GM12878 (cell line): ENCODE measurements at regions of chr11 and their contacts with region 1.

Region 1: DNA sequence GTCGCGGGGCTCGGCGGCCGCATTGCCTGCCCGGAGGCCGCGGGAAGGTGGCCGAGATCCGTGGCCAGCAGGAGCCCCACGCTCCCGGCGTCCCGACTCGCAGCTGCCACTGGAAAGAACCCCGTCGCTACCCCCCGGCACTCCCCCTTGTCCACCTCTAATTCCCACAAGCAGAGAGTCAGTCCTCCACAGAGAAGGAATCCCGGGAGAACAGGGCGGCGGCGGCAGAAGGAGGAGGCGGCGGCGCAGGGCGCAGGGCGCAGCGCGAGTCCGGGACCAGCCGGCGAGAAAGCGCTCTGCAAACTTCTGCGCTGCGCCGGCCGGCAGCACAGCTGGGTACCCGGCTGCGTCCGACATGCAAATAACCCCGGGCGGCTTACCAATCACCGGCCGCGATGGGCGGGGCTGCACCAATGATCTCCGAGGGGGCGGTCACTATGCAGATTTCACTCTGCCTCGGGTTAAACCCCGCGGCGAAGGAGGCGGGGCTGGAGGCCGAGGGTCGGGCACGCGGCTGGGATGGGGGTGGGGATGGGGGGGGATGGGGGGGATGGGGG is at the start of gene ABTB2:
- DNase-seq: peak; percentile 64
- ATAC-seq: peak; percentile 92
- H3K4me3 ChIP-seq: peak within 1 kb of the TSS; percentile 84
- H3K27ac ChIP-seq: peak within 1 kb of the TSS; percentile 13; the same call in 1 of the 2 replicates
- H3K4me1 ChIP-seq: peaks cover 5% of the 10 kb centered on the region
- H3K27me3 ChIP-seq: peaks cover 0 to 3% of the 10 kb centered on the region in 2 experiments; a peak in 2 of 4 replicates
- CTCF ChIP-seq: no peak
- EP300 ChIP-seq: no peak
- POLR2A ChIP-seq: peak; percentile 99
- RAD21 ChIP-seq: no peak
- polyA plus RNA-seq, gene ABTB2: 0.13 to 0.16 TPM

Region 2: GRCh38 chr11:33863418-33864172 is 494.2 kb before region 1 on chr11:
- CTCF ChIA-PET with region 1: no interaction called
- POLR2A ChIA-PET with region 1: no interaction called
- RAD21 ChIA-PET with region 1: interaction called, 3 read pairs
- SMC1A ChIA-PET with region 1: no interaction called
- in situ Hi-C with region 1: loop called (anchors 5 kb)
- intact Hi-C with region 1: loop called (anchors 2 kb)
- DNase-seq: no peak
- ATAC-seq: no peak
- H3K4me3 ChIP-seq: no peak overlapping the region
- H3K27ac ChIP-seq: no peak overlapping the region
- H3K4me1 ChIP-seq: no peaks in the 10 kb centered on the region; the same call in 1 of the 2 replicates
- H3K27me3 ChIP-seq: peaks cover 1 to 5% of the 10 kb centered on the region in 2 experiments; a peak in 3 of 4 replicates
- CTCF ChIP-seq: 0 out of 6 replicates have a peak, but pooled peaks of 1 of the 3 experiments have one; percentile 6
- EP300 ChIP-seq: no peak
- POLR2A ChIP-seq: no peak
- RAD21 ChIP-seq: peak; percentile 19; the same call in 1 of the 2 replicates

Region 3: GRCh38 chr11:33912405-33913361 is 445.1 kb before region 1 on chr11:
- CTCF ChIA-PET with region 1: no interaction called
- POLR2A ChIA-PET with region 1: no interaction called
- RAD21 ChIA-PET with region 1: no interaction called
- SMC1A ChIA-PET with region 1: no interaction called
- in situ Hi-C with region 1: no loop called
- intact Hi-C with region 1: no loop called
- DNase-seq: peak; percentile 82
- ATAC-seq: peak; percentile 98
- H3K4me3 ChIP-seq: no peak overlapping the region
- H3K27ac ChIP-seq: peak overlapping the region; percentile 82
- H3K4me1 ChIP-seq: peaks cover 12% of the 10 kb centered on the region
- H3K27me3 ChIP-seq: no peaks in the 10 kb centered on the region
- CTCF ChIP-seq: no peak
- EP300 ChIP-seq: 0 out of 4 replicates have a peak, but pooled peaks have one; percentile 16 to 45
- POLR2A ChIP-seq: peak; percentile 39; the same call in 1 of the 2 replicates
- RAD21 ChIP-seq: no peak

Region 4: DNA sequence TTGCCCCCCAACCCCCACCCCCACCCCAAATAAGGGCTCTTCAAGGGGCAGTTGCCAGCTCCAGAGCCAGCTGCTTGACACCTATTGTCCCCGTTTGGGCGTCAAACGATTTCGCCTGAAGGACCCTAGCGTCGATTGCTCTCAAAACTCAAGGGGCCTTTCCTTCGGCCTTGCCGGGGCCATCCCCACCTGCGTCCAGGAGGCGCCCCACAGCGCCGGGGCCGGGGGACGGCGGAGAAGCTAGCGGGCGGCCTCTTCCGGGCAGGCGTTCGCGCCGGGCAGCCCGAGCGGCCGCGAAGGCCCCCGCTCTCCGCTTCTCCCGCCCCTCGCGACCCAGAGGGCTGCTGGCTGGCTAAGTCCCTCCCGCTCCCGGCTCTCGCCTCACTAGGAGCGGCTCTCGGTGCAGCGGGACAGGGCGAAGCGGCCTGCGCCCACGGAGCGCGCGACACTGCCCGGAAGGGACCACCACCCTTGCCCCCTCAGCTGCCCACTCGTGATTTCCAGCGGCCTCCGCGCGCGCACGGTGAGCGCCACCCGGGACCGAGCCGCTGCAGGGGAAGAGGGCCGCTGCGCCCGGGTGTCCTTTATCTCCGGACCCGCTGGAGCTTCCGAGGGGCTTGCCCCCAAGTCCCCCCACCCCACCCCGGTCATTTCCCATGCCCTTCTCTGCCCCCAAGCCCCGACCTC is 306.3 kb before region 1 on chr11 and contains the start of gene CAPRIN1:
- CTCF ChIA-PET with region 1: no interaction called
- POLR2A ChIA-PET with region 1: interaction called, 3 read pairs
- RAD21 ChIA-PET with region 1: interaction called, 4 read pairs
- SMC1A ChIA-PET with region 1: no interaction called
- in situ Hi-C with region 1: no loop called
- intact Hi-C with region 1: loop called (anchors 5 kb)
- DNase-seq: peak; percentile 65
- ATAC-seq: peak; percentile 82
- H3K4me3 ChIP-seq: peak within 1 kb of the TSS; percentile 96
- H3K27ac ChIP-seq: peak within 1 kb of the TSS; percentile 91
- H3K4me1 ChIP-seq: no peaks in the 10 kb centered on the region; the same call in 1 of the 2 replicates
- H3K27me3 ChIP-seq: no peaks in the 10 kb centered on the region
- CTCF ChIP-seq: no peak
- EP300 ChIP-seq: no peak
- POLR2A ChIP-seq: peak; percentile 93
- RAD21 ChIP-seq: no peak
- polyA plus RNA-seq, gene CAPRIN1: 50.4 to 51.8 TPM

Region 5: DNA sequence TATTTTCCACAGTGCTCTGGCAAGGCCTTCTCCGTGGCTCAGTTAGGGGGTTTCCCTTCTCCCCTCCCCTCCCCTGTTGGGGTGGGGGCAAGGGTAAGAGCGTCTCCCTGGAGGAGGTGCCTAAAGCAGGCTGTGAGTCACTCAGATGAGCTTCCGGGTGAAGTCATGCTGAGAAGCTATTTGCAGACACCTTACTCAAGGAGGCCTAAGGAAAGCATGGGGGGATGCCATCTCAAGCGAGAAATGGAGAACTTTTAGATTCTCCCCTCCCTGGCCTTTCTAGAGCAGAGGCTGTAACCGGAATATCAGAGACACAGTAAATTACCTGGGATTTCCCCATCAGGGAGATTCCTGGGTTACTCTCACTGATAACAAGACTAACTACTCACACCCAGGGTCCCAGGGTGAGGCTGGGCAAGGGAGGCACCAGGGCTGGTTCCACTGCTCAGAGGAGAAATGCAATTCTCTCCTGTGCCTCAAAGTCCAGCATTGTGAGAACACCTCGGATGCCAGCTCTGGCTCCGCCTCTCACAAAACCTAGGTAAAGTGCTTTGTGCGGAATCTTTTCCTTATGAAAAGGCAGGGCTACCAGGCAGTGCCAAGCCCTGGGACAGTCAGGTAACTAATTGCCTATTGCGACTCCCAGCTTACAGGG is 123.6 kb before region 1 on chr11:
- CTCF ChIA-PET with region 1: interaction called, 5 read pairs
- POLR2A ChIA-PET with region 1: no interaction called
- RAD21 ChIA-PET with region 1: interaction called, 9 read pairs
- SMC1A ChIA-PET with region 1: interaction called, 39 read pairs
- in situ Hi-C with region 1: no loop called
- intact Hi-C with region 1: loop called (anchors 2 kb)
- DNase-seq: peak; percentile 88
- ATAC-seq: peak; percentile 86
- H3K4me3 ChIP-seq: peak overlapping the region; percentile 29; the same call in 1 of the 2 replicates
- H3K27ac ChIP-seq: peak overlapping the region; percentile 54
- H3K4me1 ChIP-seq: peaks cover 48% of the 10 kb centered on the region
- H3K27me3 ChIP-seq: no peaks in the 10 kb centered on the region
- CTCF ChIP-seq: no peak
- EP300 ChIP-seq: peak; percentile 39 to 59; a peak in 2 of 4 replicates
- POLR2A ChIP-seq: no peak
- RAD21 ChIP-seq: no peak; the same call in 1 of the 2 replicates

Region 6: DNA sequence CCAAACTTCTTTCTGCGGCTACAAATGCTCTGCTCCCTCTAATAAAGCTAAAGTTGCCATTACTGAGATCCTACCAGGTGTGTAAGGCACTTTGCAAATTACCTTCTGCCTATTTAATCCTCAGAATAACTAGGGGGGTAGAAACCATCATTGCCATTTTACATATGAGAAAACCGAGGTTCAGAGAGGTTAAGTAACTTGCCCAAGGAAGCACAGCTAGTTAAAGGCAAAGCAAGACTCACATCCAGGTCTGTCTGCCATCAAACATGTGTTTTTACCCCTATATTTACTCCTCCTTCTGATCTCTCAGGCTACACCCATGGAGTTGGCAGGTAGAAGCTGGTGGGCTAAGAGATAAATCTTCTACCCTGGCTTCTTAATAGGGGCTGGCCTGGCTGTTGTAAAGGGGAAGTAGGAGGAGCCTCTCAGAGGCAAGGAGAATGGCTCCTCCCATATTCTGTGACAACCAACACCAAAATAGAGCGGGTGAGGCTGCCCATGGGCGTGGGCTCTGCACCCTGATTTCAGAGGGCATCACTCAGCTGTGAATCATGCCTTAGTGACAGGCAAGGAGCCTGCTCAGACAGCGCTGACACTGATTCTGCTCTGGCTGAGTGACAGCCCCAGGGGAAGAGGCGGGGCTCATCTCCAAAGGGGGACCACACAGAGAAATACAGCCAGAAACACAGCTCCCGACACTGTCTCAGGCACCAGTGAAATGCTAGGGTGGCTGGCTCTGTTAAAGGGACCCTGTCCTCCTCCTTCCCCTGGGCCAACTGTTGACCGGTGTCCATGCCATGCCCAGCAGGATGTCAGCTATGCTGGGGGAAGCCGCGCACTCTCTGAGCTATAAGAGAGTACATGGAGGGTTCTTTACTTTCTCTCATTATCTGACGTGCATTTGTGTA is 106.8 kb before region 1 on chr11:
- CTCF ChIA-PET with region 1: interaction called, 4 read pairs
- POLR2A ChIA-PET with region 1: no interaction called
- RAD21 ChIA-PET with region 1: interaction called, 14 read pairs
- SMC1A ChIA-PET with region 1: interaction called, 28 read pairs
- in situ Hi-C with region 1: no loop called
- intact Hi-C with region 1: no loop called
- DNase-seq: no peak
- ATAC-seq: peak; percentile 86
- H3K4me3 ChIP-seq: no peak overlapping the region
- H3K27ac ChIP-seq: no peak overlapping the region
- H3K4me1 ChIP-seq: peaks cover 16% of the 10 kb centered on the region
- H3K27me3 ChIP-seq: no peaks in the 10 kb centered on the region
- CTCF ChIP-seq: no peak
- EP300 ChIP-seq: no peak
- POLR2A ChIP-seq: no peak
- RAD21 ChIP-seq: no peak

Region 7: DNA sequence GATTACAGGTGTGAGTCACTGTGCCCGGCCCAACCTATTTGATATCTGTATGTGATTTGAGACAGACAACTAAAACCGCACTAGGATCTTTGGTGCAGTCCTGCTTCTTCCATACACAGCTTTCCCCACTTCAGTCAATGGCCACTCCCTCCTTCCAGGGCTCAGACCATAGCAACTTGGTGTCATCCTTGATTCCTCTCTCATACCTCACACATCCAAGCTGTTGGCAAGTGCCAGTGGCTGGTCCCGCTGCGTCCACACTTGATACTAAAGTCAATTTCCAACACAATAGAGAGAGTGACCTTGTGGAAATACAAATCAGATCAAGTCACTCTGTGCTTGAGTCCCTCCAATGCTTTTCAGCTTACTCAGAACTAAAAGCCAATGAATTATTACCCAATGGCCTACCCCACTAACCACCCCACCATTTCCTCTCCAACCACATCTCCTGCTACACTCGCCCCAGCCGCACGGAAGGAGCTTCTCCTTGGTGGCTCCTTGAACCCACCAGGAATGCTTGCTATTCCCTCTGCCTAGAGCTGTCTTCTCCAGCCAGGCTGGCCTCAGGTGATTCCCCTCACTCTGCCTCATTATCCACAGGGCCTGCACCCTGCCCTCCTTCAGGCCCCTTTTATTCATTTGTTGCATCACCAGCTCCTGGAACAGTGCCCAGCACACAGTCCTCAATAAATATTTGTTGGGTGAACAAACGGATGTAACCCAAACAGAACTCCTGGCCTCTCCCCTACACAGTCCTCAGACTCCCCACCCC is 12.8 kb before region 1 on chr11:
- CTCF ChIA-PET with region 1: interaction called, 12 read pairs
- POLR2A ChIA-PET with region 1: no interaction called
- RAD21 ChIA-PET with region 1: interaction called, 15 read pairs
- SMC1A ChIA-PET with region 1: interaction called, 16 read pairs
- in situ Hi-C with region 1: no loop called
- intact Hi-C with region 1: no loop called
- DNase-seq: no peak
- ATAC-seq: no peak
- H3K4me3 ChIP-seq: no peak overlapping the region
- H3K27ac ChIP-seq: no peak overlapping the region
- H3K4me1 ChIP-seq: no peaks in the 10 kb centered on the region
- H3K27me3 ChIP-seq: no peaks in the 10 kb centered on the region
- CTCF ChIP-seq: no peak
- EP300 ChIP-seq: no peak
- POLR2A ChIP-seq: no peak
- RAD21 ChIP-seq: no peak

Region 8: DNA sequence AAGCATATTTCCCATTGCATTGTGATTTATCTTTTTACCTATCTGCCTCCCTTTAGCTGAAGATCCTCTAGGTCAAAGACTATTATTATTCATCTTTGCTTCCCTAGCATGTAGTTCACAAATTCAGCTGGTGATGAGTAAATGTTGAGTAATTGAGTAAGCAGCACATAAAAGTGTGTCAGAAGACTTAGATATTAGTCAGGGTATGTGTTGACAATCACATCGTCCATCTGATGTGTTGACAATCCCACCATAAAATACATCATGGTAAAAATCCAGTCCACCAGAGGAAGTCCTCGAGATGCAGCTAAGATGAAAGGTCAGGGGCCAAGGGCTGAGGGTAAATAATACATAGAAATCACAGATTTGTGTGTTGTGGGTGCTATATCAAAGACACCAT is 22.9 kb after region 1 on chr11:
- CTCF ChIA-PET with region 1: no interaction called
- POLR2A ChIA-PET with region 1: no interaction called
- RAD21 ChIA-PET with region 1: no interaction called
- SMC1A ChIA-PET with region 1: no interaction called
- in situ Hi-C with region 1: no loop called
- intact Hi-C with region 1: no loop called
- DNase-seq: no peak
- ATAC-seq: no peak
- H3K4me3 ChIP-seq: no peak overlapping the region
- H3K27ac ChIP-seq: no peak overlapping the region
- H3K4me1 ChIP-seq: no peaks in the 10 kb centered on the region
- H3K27me3 ChIP-seq: no peaks in the 10 kb centered on the region
- CTCF ChIP-seq: no peak
- EP300 ChIP-seq: no peak
- POLR2A ChIP-seq: no peak
- RAD21 ChIP-seq: no peak

Region 9: GRCh38 chr11:34405079-34405858 is 47.5 kb after region 1 on chr11:
- CTCF ChIA-PET with region 1: no interaction called
- POLR2A ChIA-PET with region 1: no interaction called
- RAD21 ChIA-PET with region 1: no interaction called
- SMC1A ChIA-PET with region 1: no interaction called
- in situ Hi-C with region 1: no loop called
- intact Hi-C with region 1: no loop called
- DNase-seq: peak; percentile 16
- ATAC-seq: peak; percentile 56
- H3K4me3 ChIP-seq: 0 out of 2 replicates have a peak overlapping the region, but pooled peaks have one; percentile 13
- H3K27ac ChIP-seq: no peak overlapping the region
- H3K4me1 ChIP-seq: no peaks in the 10 kb centered on the region
- H3K27me3 ChIP-seq: no peaks in the 10 kb centered on the region
- CTCF ChIP-seq: no peak
- EP300 ChIP-seq: no peak
- POLR2A ChIP-seq: no peak
- RAD21 ChIP-seq: no peak

Region 10: GRCh38 chr11:34460278-34460677 is 102.5 kb after region 1 on chr11:
- CTCF ChIA-PET with region 1: no interaction called
- POLR2A ChIA-PET with region 1: no interaction called
- RAD21 ChIA-PET with region 1: no interaction called
- SMC1A ChIA-PET with region 1: no interaction called
- in situ Hi-C with region 1: no loop called
- intact Hi-C with region 1: no loop called
- DNase-seq: no peak
- ATAC-seq: no peak
- H3K4me3 ChIP-seq: no peak overlapping the region
- H3K27ac ChIP-seq: no peak overlapping the region
- H3K4me1 ChIP-seq: no peaks in the 10 kb centered on the region
- H3K27me3 ChIP-seq: no peaks in the 10 kb centered on the region
- CTCF ChIP-seq: no peak
- EP300 ChIP-seq: no peak
- POLR2A ChIP-seq: no peak
- RAD21 ChIP-seq: no peak